Caco-2 (cell line): ENCODE measurements at regions of chr3 and their contacts with region 1.

Region 1: GRCh38 chr3:157447026-157447694 is 10.5 kb downstream of the PTX3 start:
- DNase-seq: no peak
- H3K4me3 ChIP-seq: no peak overlapping the region
- H3K4me3 Mint-ChIP-seq: no peak overlapping the region
- H3K27ac Mint-ChIP-seq: no peak overlapping the region
- H3K4me1 ChIP-seq: no peaks in the 10 kb centered on the region
- H3K4me1 Mint-ChIP-seq: no peaks in the 10 kb centered on the region
- H3K27me3 ChIP-seq: no peaks in the 10 kb centered on the region
- H3K27me3 Mint-ChIP-seq: peaks cover 3% of the 10 kb centered on the region
- CTCF ChIP-seq: peak; percentile 36 to 64

Region 2: GRCh38 chr3:157239082-157239704 is 208.0 kb before region 1 on chr3:
- CTCF ChIA-PET with region 1: no interaction called
- POLR2A ChIA-PET with region 1: no interaction called
- intact Hi-C with region 1: loop called (anchors 1 kb)
- DNase-seq: peak; percentile 70 to 82
- H3K4me3 ChIP-seq: no peak overlapping the region
- H3K4me3 Mint-ChIP-seq: no peak overlapping the region
- H3K27ac Mint-ChIP-seq: no peak overlapping the region
- H3K4me1 ChIP-seq: no peaks in the 10 kb centered on the region
- H3K4me1 Mint-ChIP-seq: peaks cover 10% of the 10 kb centered on the region
- H3K27me3 ChIP-seq: no peaks in the 10 kb centered on the region; the same call in 1 of the 2 replicates
- H3K27me3 Mint-ChIP-seq: peaks cover 10% of the 10 kb centered on the region
- CTCF ChIP-seq: peak; percentile 86 to 95

Region 3: GRCh38 chr3:157329551-157329950 is 117.6 kb before region 1 on chr3:
- CTCF ChIA-PET with region 1: no interaction called
- POLR2A ChIA-PET with region 1: no interaction called
- intact Hi-C with region 1: loop called (anchors 10 kb)
- DNase-seq: no peak
- H3K4me3 ChIP-seq: no peak overlapping the region
- H3K4me3 Mint-ChIP-seq: no peak overlapping the region
- H3K27ac Mint-ChIP-seq: no peak overlapping the region
- H3K4me1 ChIP-seq: no peaks in the 10 kb centered on the region
- H3K4me1 Mint-ChIP-seq: no peaks in the 10 kb centered on the region
- H3K27me3 ChIP-seq: no peaks in the 10 kb centered on the region
- H3K27me3 Mint-ChIP-seq: peaks cover 2% of the 10 kb centered on the region
- CTCF ChIP-seq: no peak

Region 4: DNA sequence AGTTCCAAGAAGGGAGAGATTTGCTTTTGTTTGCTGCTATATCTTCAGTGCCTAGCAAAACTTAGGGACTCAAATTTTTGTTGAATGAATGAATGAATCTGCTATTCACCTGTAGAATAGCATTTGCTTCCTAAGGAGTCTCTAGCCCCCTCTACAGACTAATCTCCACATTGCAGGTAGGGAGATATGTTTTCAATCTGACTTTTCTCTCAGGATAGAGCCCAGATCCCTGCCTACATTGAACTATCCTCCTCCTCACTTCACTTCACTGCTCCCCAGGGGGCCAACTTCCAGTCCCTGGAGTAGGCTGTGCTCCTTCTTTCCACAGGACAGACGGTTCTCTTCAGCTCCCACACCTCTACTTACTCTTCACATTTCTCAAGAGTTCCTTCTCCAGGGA is 92.4 kb before region 1 on chr3:
- CTCF ChIA-PET with region 1: no interaction called
- POLR2A ChIA-PET with region 1: no interaction called
- intact Hi-C with region 1: loop called (anchors 10 kb)
- DNase-seq: peak in 1 of 2 experiments; percentile 13
- H3K4me3 ChIP-seq: no peak overlapping the region
- H3K4me3 Mint-ChIP-seq: no peak overlapping the region
- H3K27ac Mint-ChIP-seq: no peak overlapping the region
- H3K4me1 ChIP-seq: no peaks in the 10 kb centered on the region; the same call in 1 of the 2 replicates
- H3K4me1 Mint-ChIP-seq: no peaks in the 10 kb centered on the region
- H3K27me3 ChIP-seq: no peaks in the 10 kb centered on the region
- H3K27me3 Mint-ChIP-seq: peaks cover 9% of the 10 kb centered on the region
- CTCF ChIP-seq: peak in 1 of 2 experiments; percentile 21

Region 5: DNA sequence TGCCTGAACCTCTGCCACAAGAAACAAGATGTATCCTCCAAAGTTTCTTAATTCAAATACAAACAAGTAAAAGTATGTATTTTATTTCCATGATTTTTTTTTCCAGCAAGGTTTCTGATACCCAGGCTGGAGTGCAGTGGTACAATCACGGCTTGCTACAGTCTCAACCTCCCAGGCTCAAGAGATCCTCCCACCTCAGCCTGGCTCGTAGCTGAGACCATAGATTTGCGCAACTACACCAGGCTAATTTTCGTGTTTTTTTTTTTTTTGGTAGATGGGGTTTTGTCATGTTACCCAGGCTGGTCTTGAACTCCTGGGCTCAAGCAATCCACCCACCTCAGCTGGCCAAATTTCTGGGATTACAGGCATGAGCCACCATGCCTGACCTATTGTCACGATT is 68.2 kb after region 1 on chr3:
- CTCF ChIA-PET with region 1: no interaction called
- POLR2A ChIA-PET with region 1: no interaction called
- intact Hi-C with region 1: no loop called
- DNase-seq: no peak
- H3K4me3 ChIP-seq: no peak overlapping the region
- H3K4me3 Mint-ChIP-seq: no peak overlapping the region
- H3K27ac Mint-ChIP-seq: no peak overlapping the region
- H3K4me1 ChIP-seq: no peaks in the 10 kb centered on the region
- H3K4me1 Mint-ChIP-seq: no peaks in the 10 kb centered on the region
- H3K27me3 ChIP-seq: no peaks in the 10 kb centered on the region
- H3K27me3 Mint-ChIP-seq: peaks cover 11% of the 10 kb centered on the region
- CTCF ChIP-seq: no peak

Region 6: DNA sequence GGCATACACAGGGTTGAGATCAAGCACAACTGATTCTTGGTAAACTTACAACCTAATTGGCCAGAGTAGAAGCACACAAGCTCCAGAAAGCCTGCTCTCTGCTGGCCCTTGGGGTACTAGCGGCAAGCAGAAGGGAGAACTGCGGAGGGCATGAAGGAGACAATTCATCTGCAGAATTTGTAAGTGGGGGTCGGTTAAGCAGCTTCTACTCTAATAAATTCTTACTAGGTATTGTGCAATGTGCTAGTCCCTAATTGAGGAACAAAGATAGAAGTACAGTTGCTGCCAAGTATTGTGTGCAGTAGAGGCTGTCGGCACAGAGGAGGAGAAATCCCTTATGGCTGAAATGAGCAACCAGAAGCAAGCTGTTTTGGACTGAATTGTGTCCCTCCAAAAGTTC is 147.3 kb after region 1 on chr3:
- CTCF ChIA-PET with region 1: no interaction called
- POLR2A ChIA-PET with region 1: no interaction called
- intact Hi-C with region 1: no loop called
- DNase-seq: no peak
- H3K4me3 ChIP-seq: no peak overlapping the region
- H3K4me3 Mint-ChIP-seq: no peak overlapping the region
- H3K27ac Mint-ChIP-seq: no peak overlapping the region
- H3K4me1 ChIP-seq: no peaks in the 10 kb centered on the region
- H3K4me1 Mint-ChIP-seq: no peaks in the 10 kb centered on the region
- H3K27me3 ChIP-seq: no peaks in the 10 kb centered on the region
- H3K27me3 Mint-ChIP-seq: peaks cover 20% of the 10 kb centered on the region
- CTCF ChIP-seq: peak in 1 of 2 experiments; percentile 33